ENCODE measurements at regions of chr10 and their contacts with region 1.

Region 1: DNA sequence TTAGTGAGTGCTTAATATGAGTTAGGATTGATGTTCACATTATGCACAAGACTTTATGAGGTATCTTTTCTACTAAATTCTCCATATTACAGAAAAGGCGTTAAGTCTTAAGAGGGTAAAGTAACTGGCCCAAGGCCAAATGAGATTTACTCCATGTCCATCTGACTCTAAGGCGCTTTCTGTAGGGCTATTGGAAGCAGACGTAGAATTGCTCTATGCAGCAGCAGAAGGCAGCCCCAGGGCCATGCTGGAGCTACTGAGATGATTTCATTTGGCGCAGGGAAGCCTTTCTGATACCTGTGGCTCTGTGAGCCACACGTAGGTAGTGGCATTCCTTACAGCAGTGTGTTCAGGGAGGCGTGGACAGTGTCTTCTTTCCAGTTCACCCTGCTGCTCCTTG is 133.1 kb downstream of the SH2D4B start:
- DNase-seq: no peak
- ATAC-seq: no peak
- H3K4me3 ChIP-seq: no peak overlapping the region
- H3K27ac ChIP-seq: no peak overlapping the region
- H3K4me1 ChIP-seq: no peaks in the 10 kb centered on the region
- H3K27me3 ChIP-seq: no peaks in the 10 kb centered on the region
- CTCF ChIP-seq: no peak

Region 2: DNA sequence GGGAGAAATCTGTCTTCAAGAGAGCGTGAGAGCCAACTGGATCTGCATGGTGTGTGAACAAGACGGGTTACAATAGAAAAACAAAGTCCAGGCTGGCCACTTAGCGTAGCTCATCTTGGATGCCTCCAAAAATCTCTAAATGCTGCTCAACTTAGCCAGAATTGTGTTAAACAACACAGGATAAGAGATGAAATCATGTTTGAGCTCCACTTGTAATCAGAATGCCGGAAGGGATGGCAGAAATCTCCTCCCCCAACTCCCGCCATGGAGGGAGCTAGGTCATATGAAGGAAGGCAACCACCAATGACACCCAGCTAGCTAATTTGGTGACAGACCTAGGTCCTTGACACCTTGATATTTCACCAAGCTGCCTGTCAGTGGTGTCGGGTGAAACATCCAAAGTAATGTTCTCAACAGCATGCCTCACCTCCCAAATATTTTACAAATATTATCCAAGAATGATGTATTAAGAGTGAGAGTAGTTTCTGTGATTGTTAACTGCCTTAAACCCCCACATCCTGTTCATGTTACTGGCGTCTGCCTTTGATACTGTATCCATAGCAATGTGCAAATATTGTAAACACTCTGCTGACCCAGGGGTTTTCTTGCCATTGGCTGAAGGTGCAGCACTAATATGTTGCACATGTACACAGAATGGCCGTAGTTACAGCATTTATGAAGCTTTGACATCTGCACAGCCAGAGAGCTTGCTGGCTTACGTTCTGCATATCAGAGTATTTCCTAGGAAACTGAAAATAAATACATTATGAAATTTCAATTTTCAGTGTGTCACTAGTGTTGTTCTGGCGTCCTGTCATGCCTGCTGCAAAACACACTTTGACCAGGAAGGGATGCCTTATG is 566.5 kb before region 1 on chr10:
- intact Hi-C with region 1: no loop called
- DNase-seq: no peak
- ATAC-seq: peak in 2 of 4 donors; percentile 71 to 80
- H3K4me3 ChIP-seq: no peak overlapping the region
- H3K27ac ChIP-seq: peak overlapping the region in 1 of 4 donors; percentile 37
- H3K4me1 ChIP-seq: no peaks in the 10 kb centered on the region
- H3K27me3 ChIP-seq: no peaks in the 10 kb centered on the region
- CTCF ChIP-seq: no peak

Region 3: DNA sequence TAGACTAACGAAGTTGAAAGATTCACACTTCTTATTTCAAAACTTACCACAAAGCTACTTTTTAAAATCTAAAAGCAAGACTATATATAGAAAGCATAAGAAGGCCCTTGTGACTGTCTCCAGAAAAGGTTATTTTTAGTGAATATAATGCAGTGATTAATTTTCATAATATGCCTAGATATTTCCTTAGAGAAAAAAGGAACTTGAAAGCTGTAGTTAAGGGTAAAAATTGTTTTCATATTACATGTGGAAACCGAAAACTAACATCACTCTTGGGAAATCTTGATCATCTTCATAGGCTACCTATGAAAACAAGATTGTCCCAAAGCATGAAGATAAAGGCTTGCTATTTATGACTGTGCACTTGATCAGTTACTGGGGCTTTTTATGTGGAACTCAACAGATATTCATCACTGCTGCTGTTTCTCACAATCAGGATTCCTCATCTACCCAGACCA is 90.2 kb after region 1 on chr10:
- intact Hi-C with region 1: no loop called
- DNase-seq: no peak
- ATAC-seq: no peak
- H3K4me3 ChIP-seq: no peak overlapping the region
- H3K27ac ChIP-seq: no peak overlapping the region
- H3K4me1 ChIP-seq: no peaks in the 10 kb centered on the region
- H3K27me3 ChIP-seq: no peaks in the 10 kb centered on the region
- CTCF ChIP-seq: no peak

Region 4: GRCh38 chr10:80917636-80918035 is 246.9 kb after region 1 on chr10:
- intact Hi-C with region 1: loop called in 2 of 3 experiments (anchors 10 kb)
- DNase-seq: no peak
- ATAC-seq: no peak
- H3K4me3 ChIP-seq: no peak overlapping the region
- H3K27ac ChIP-seq: no peak overlapping the region
- H3K4me1 ChIP-seq: no peaks in the 10 kb centered on the region
- H3K27me3 ChIP-seq: peaks cover 0 to 6% (median 0%) of the 10 kb centered on the region in 4 donors
- CTCF ChIP-seq: no peak

Region 5: GRCh38 chr10:81108516-81109199 is 437.9 kb after region 1 on chr10:
- intact Hi-C with region 1: no loop called
- DNase-seq: no peak
- ATAC-seq: peak in 2 of 4 donors; percentile 41 to 55
- H3K4me3 ChIP-seq: no peak overlapping the region
- H3K27ac ChIP-seq: no peak overlapping the region
- H3K4me1 ChIP-seq: no peaks in the 10 kb centered on the region
- H3K27me3 ChIP-seq: no peaks in the 10 kb centered on the region
- CTCF ChIP-seq: no peak